ENCODE measurements at regions of chr15 and their contacts with region 1.

Region 1: GRCh38 chr15:51162865-51163762 is 68.4 kb upstream of the TNFAIP8L3 start:
- DNase-seq: peak; percentile 78
- H3K4me3 Mint-ChIP-seq: peak overlapping the region; percentile 60
- H3K27ac Mint-ChIP-seq: no peak overlapping the region
- H3K4me1 Mint-ChIP-seq: peaks cover 10% of the 10 kb centered on the region
- H3K27me3 Mint-ChIP-seq: no peaks in the 10 kb centered on the region
- CTCF ChIP-seq: peak; percentile 90

Region 2: DNA sequence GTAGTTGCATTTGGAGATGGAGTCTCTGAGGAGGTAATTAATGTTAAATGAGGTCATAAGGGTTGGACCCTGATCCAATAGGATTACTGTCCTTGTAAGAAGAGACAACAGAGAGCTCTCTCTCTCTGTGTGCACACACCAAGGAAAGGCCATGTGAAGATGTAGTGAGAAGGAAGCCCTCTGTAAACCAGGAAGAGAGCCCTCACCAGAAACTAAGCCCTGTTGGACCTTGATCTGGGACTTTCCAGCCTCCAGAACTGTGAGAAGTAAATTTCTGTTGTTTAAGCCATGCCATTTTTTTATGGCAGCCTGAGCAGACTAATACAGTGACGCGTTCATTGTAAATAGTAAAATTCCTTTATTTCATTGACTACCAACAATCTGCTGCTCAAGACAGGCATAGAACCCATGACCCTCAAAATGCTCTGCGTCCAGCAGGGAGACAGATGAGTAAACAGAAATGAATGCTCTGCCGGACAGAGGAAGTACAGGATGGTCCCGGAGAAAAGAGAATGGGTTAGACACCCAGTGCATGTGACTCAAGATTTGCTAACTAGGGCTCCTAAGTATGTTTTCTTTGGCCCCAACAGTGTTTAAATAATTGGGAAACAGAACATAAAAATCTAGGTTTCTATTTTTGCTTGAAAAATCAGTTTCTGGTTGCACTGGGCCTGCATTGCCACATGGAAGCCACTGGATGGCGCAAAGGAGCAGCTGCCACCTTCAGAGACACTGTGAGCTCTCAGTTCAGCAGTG is 30.6 kb before region 1 on chr15:
- CTCF ChIA-PET with region 1: interaction called, 31 read pairs
- POLR2A ChIA-PET with region 1: interaction called, 5 read pairs
- intact Hi-C with region 1: no loop called
- DNase-seq: peak; percentile 94
- H3K4me3 Mint-ChIP-seq: no peak overlapping the region
- H3K27ac Mint-ChIP-seq: peak overlapping the region; percentile 77
- H3K4me1 Mint-ChIP-seq: peaks cover 47% of the 10 kb centered on the region
- H3K27me3 Mint-ChIP-seq: no peaks in the 10 kb centered on the region
- CTCF ChIP-seq: peak; percentile 82

Region 3: DNA sequence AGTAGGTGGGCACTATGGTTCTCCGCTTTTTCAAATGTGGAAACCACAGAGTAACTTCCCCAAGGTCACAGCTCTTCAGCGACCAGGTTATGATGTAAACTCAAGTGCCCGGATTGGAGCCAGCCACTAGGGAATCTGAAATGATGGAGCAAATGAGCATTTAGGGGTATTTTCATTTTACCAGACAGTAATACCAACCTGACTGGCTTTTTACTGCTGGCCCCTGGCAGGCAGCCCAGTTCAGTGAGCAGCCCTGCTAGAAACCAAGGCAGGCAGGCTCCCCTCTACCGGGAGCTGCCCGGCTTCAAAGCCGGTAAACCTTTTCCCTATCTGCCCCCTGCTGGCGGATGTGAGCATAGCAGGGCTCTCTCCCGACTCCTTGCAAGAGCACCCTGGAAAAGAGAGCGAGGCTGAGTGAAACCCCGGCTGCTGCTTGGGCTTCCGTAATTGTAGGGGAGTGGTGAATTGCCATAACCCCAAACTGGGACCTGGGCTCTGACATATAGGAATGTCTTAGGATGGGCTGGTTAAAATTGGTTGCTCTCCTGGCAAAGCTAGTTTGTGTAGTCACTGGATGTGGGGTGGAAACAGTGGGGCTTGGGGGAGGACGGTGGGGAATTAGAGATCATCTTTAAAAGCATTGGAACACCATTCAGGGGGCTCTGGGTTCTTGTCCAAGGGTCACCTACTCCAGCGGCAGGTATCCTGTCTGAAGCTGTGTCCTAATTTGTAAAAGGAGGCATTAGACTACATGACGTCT is 29.6 kb after region 1 on chr15:
- CTCF ChIA-PET with region 1: interaction called, 116 read pairs
- POLR2A ChIA-PET with region 1: interaction called, 15 read pairs
- intact Hi-C with region 1: loop called (anchors 1 kb)
- DNase-seq: peak; percentile 91
- H3K4me3 Mint-ChIP-seq: no peak overlapping the region
- H3K27ac Mint-ChIP-seq: peak overlapping the region; percentile 7
- H3K4me1 Mint-ChIP-seq: peaks cover 24% of the 10 kb centered on the region
- H3K27me3 Mint-ChIP-seq: no peaks in the 10 kb centered on the region
- CTCF ChIP-seq: peak; percentile 89

Region 4: GRCh38 chr15:51218299-51218938 is 55.3 kb after region 1 on chr15:
- CTCF ChIA-PET with region 1: interaction called, 12 read pairs
- POLR2A ChIA-PET with region 1: no interaction called
- intact Hi-C with region 1: no loop called
- DNase-seq: no peak
- H3K4me3 Mint-ChIP-seq: no peak overlapping the region
- H3K27ac Mint-ChIP-seq: no peak overlapping the region
- H3K4me1 Mint-ChIP-seq: peaks cover 19% of the 10 kb centered on the region
- H3K27me3 Mint-ChIP-seq: no peaks in the 10 kb centered on the region
- CTCF ChIP-seq: no peak

Region 5: GRCh38 chr15:51281368-51281967 is 118.4 kb after region 1 on chr15:
- CTCF ChIA-PET with region 1: interaction called, 56 read pairs
- POLR2A ChIA-PET with region 1: interaction called, 4 read pairs
- intact Hi-C with region 1: no loop called
- DNase-seq: peak; percentile 69
- H3K4me3 Mint-ChIP-seq: no peak overlapping the region
- H3K27ac Mint-ChIP-seq: no peak overlapping the region
- H3K4me1 Mint-ChIP-seq: peaks cover 9% of the 10 kb centered on the region
- H3K27me3 Mint-ChIP-seq: peaks cover 17% of the 10 kb centered on the region
- CTCF ChIP-seq: peak; percentile 47

Region 6: DNA sequence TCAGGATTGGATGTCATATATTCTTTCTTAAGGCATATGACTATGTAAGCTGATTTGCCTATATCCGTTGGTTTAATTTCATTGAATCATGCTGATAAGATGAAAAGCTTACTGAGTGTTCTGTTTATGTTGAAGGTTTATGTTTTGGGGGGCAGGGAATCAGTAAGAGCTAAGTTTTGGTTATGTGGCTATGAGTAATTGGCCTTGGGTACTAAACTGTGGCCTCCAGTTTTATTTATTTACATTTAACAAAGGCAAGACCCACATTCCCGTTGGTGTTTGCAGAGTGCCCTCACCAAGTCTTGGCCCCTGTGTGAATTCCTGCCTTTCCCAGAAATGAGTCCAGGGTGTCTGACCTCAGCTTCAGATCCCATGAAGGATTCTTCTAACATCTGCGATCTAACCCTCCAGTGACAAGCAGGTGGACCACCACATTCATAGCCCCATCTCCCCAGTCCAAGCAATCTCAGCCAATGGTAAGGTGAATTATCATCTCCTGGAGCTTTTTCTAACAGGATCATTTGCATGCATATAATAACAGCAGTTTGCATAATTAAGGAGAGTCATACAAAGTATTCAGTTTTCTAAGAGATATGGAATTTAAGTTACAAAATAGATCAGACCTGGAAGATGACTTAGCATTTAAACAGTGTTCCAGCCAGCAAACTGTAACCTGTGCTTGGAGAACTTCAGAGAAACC is 205.8 kb after region 1 on chr15:
- CTCF ChIA-PET with region 1: interaction called, 195 read pairs
- POLR2A ChIA-PET with region 1: no interaction called
- intact Hi-C with region 1: no loop called
- DNase-seq: peak; percentile 60
- H3K4me3 Mint-ChIP-seq: no peak overlapping the region
- H3K27ac Mint-ChIP-seq: no peak overlapping the region
- H3K4me1 Mint-ChIP-seq: peaks cover 11% of the 10 kb centered on the region
- H3K27me3 Mint-ChIP-seq: no peaks in the 10 kb centered on the region
- CTCF ChIP-seq: no peak

Region 7: GRCh38 chr15:51401872-51402517 is 238.9 kb after region 1 on chr15:
- CTCF ChIA-PET with region 1: interaction called, 49 read pairs
- POLR2A ChIA-PET with region 1: no interaction called
- intact Hi-C with region 1: loop called (anchors 1 kb)
- DNase-seq: peak; percentile 52
- H3K4me3 Mint-ChIP-seq: no peak overlapping the region
- H3K27ac Mint-ChIP-seq: no peak overlapping the region
- H3K4me1 Mint-ChIP-seq: peaks cover 6% of the 10 kb centered on the region
- H3K27me3 Mint-ChIP-seq: no peaks in the 10 kb centered on the region
- CTCF ChIP-seq: peak; percentile 42

Region 8: DNA sequence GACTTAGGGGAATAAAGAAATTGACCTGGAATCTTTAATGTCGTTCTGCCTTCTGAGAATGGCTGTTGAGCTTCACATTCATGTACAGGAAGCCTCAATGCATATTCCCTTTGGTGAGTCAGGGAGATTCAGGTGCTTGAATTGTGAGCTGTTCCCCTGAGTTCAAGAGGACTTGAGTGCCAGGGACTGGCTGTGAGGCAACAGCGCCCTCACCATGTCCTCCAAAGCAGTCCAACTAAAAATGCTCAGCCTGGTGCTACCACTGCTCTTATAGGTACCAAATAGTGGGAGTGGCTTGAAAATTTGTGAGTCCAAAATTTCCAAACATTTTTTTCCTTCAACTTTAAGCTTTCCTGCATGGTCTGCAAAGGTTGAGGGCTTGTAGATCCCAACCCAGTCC is 754.4 kb after region 1 on chr15:
- CTCF ChIA-PET with region 1: no interaction called
- POLR2A ChIA-PET with region 1: no interaction called
- intact Hi-C with region 1: no loop called
- DNase-seq: peak; percentile 63
- H3K4me3 Mint-ChIP-seq: no peak overlapping the region
- H3K27ac Mint-ChIP-seq: no peak overlapping the region
- H3K4me1 Mint-ChIP-seq: no peaks in the 10 kb centered on the region
- H3K27me3 Mint-ChIP-seq: no peaks in the 10 kb centered on the region
- CTCF ChIP-seq: peak; percentile 35

Region 9: DNA sequence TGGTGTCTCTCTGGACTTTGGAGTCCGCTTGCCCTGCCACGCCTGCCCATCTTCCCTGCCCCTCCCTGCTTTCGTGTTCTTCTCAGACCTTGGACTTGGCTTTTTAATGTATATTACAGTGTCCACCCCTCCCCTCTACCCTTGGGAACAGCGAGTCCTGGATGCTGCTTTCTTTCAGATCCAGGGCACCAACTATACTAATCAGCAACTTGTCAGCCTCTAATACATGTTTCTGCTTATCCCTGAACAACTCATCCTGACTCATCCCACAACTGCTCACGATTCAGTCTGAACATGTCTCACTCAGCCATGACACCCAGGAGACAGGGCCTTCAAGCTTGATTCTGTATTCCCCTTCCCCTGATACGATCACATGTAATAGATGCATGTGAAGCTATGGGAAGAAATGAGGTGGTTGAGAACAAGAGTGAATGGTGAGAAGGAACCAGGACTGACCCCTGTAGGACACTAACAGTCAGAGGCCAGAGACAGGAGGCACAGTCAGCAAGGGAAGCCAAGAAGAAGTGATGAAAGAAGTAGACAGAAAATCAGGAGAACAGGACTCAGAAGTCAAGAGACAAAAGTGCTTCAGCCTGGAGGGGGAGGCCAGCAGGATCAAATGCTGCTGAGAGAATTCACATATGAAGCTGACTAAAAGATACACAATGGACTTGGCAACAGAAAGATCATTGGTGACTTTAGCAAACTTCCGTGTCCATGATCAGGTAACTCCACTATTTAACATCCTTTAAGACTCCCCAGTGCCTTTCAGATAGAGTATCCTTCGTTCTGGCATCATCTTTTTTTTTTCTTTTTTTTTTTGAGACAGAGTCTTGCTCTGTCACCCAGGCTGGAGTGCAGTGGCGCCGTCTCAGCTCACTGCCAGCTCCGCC is 914.0 kb after region 1 on chr15:
- CTCF ChIA-PET with region 1: no interaction called
- POLR2A ChIA-PET with region 1: no interaction called
- intact Hi-C with region 1: no loop called
- DNase-seq: peak; percentile 96
- H3K4me3 Mint-ChIP-seq: peak overlapping the region; percentile 53
- H3K27ac Mint-ChIP-seq: peak overlapping the region; percentile 96
- H3K4me1 Mint-ChIP-seq: peaks cover 43% of the 10 kb centered on the region
- H3K27me3 Mint-ChIP-seq: no peaks in the 10 kb centered on the region
- CTCF ChIP-seq: no peak

Measured in MCF 10A (cell line).